Esophagus squamous epithelium (tissue), 5 donors: ENCODE measurements at regions of chr14 and their contacts with region 1.

Region 1: GRCh38 chr14:88168498-88169165 is 154.4 kb downstream of the KCNK10 start:
- DNase-seq: no peak
- H3K4me3 ChIP-seq: no peak overlapping the region
- H3K27ac ChIP-seq: no peak overlapping the region
- H3K4me1 ChIP-seq: no peaks in the 10 kb centered on the region
- H3K27me3 ChIP-seq: peaks cover 0 to 12% (median 0%) of the 10 kb centered on the region in 4 donors
- CTCF ChIP-seq: peak; percentile 30 to 68 (median 59)
- POLR2A ChIP-seq: no peak

Region 2: DNA sequence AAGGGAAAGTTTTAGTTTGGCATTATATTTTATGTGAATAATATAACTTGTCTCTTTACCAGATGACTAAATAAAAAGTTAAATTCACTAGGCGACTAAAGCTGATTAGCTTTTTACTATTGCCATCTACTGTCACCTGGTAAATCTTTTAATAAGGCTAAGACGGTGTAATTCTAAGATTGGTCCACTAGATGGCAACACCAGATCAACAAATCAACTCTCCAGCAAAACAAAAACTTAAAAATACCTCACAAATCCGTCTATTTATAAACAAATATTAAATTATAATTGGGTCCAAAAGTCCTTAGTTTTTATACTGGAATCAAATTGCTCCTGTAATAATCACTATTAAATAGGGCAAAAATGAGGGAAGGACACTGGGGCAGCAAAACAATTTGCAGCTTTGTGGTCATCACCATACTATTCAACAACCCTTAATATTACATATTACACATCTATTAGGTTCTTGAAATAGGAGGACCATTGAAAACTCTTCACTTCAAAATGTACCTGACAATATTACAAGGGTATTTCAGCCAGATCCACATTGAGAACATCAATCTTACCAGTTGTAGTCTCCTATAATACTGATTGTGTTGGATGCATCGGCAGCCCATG is 223.5 kb before region 1 on chr14:
- intact Hi-C with region 1: loop called (anchors 10 kb)
- DNase-seq: no peak
- H3K4me3 ChIP-seq: no peak overlapping the region
- H3K27ac ChIP-seq: no peak overlapping the region
- H3K4me1 ChIP-seq: no peaks in the 10 kb centered on the region
- H3K27me3 ChIP-seq: no peaks in the 10 kb centered on the region
- CTCF ChIP-seq: peak; percentile 26 to 76 (median 57)
- POLR2A ChIP-seq: no peak

Region 3: DNA sequence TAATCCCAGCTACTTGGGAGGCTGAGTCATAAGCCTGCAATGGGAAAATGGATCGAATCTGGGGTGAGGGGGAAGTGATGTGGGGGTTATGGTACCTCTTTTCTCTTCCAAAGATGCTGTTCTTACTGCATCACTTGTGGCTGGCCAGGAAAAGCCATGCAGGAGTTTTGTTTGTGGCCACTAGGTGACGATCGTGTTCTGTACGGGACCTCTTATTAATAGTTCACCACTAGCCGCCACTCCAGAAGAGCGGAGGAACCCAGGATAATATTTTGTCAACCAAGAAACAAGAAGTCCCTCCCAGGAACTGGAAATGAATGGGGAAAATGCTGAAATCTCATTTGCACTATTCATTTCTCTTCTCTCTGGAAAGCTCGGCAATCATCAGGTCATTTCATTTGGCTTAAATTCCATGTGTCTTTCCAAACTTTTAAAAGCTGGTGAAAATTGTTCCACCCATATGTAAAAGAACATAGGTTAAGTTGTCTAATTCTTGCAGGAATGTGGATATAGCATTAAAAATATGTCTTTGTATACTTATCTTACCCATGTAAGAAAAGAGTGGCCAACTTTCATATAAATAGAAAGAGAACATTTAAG is 154.8 kb before region 1 on chr14:
- intact Hi-C with region 1: loop called (anchors 10 kb)
- DNase-seq: no peak
- H3K4me3 ChIP-seq: no peak overlapping the region
- H3K27ac ChIP-seq: no peak overlapping the region
- H3K4me1 ChIP-seq: no peaks in the 10 kb centered on the region
- H3K27me3 ChIP-seq: no peaks in the 10 kb centered on the region
- CTCF ChIP-seq: peak; percentile 61 to 89 (median 82)
- POLR2A ChIP-seq: no peak